Activated CD8-positive, alpha-beta T cell treated with anti-CD3 and anti-CD28 coated beads for 36 hours (primary cell): ENCODE measurements at regions of chrX and their contacts with region 1.

Region 1: GRCh38 chrX:69222103-69223090 is 57.1 kb upstream of the PJA1 start:
- DNase-seq: peak; percentile 78
- ATAC-seq: peak; percentile 90
- H3K4me3 Mint-ChIP-seq: no peak overlapping the region
- H3K27ac Mint-ChIP-seq: no peak overlapping the region
- H3K4me1 Mint-ChIP-seq: no peaks in the 10 kb centered on the region
- H3K27me3 Mint-ChIP-seq: no peaks in the 10 kb centered on the region
- CTCF ChIP-seq: peak; percentile 52

Region 2: GRCh38 chrX:68732906-68733493 is 489.4 kb before region 1 on chrX:
- CTCF ChIA-PET with region 1: interaction called, 7 read pairs
- POLR2A ChIA-PET with region 1: no interaction called
- intact Hi-C with region 1: loop called (anchors 10 kb)
- DNase-seq: peak; percentile 73
- ATAC-seq: peak; percentile 71
- H3K4me3 Mint-ChIP-seq: no peak overlapping the region
- H3K27ac Mint-ChIP-seq: no peak overlapping the region
- H3K4me1 Mint-ChIP-seq: peaks cover 2% of the 10 kb centered on the region
- H3K27me3 Mint-ChIP-seq: peaks cover 4% of the 10 kb centered on the region
- CTCF ChIP-seq: peak; percentile 53

Region 3: GRCh38 chrX:68828740-68829552 is 393.5 kb before region 1 on chrX and contains the start of gene EFNB1:
- CTCF ChIA-PET with region 1: interaction called, 83 read pairs
- POLR2A ChIA-PET with region 1: interaction called, 3 read pairs
- intact Hi-C with region 1: loop called (anchors 5 kb)
- DNase-seq: peak; percentile 88
- ATAC-seq: peak; percentile 93
- H3K4me3 Mint-ChIP-seq: peak within 1 kb of the TSS; percentile 79
- H3K27ac Mint-ChIP-seq: peak within 1 kb of the TSS; percentile 75
- H3K4me1 Mint-ChIP-seq: peaks cover 20% of the 10 kb centered on the region
- H3K27me3 Mint-ChIP-seq: no peaks in the 10 kb centered on the region
- CTCF ChIP-seq: no peak
- total RNA-seq, gene EFNB1: 3.1 to 4.2 TPM

Region 4: GRCh38 chrX:69093960-69094871 is 128.2 kb before region 1 on chrX:
- CTCF ChIA-PET with region 1: interaction called, 14 read pairs
- POLR2A ChIA-PET with region 1: no interaction called
- intact Hi-C with region 1: no loop called
- DNase-seq: peak; percentile 43
- ATAC-seq: peak; percentile 66
- H3K4me3 Mint-ChIP-seq: no peak overlapping the region
- H3K27ac Mint-ChIP-seq: no peak overlapping the region
- H3K4me1 Mint-ChIP-seq: no peaks in the 10 kb centered on the region
- H3K27me3 Mint-ChIP-seq: no peaks in the 10 kb centered on the region
- CTCF ChIP-seq: no peak

Region 5: DNA sequence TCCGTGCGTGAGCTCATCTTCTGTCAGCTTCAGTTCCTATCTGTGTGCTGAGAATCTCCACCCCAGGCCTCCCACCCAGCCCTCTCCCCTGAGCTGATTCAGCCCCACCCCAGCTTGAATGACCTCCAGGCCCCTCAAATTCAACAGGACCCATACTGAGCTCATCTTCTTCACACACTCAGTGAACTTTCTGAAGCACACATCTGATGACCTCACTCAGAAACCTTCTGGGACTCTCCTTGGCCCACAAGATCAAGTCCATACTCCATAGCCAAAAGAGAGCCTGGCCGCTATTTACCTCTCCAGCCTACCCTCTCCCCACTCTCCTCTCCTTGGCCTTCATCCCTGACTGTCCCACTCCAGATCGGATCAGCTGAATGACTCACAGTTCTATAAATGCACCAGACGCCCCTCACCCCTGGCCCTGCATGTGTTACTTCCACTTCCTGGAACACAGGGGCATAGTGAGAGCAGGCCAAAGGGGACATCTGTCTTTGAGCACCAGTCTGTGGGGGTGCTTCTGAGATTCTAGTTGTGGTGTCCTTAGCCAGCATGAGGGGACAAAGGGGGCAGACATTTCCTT is 119.7 kb before region 1 on chrX:
- CTCF ChIA-PET with region 1: interaction called, 5 read pairs
- POLR2A ChIA-PET with region 1: no interaction called
- intact Hi-C with region 1: loop called (anchors 5 kb)
- DNase-seq: no peak
- ATAC-seq: no peak
- H3K4me3 Mint-ChIP-seq: no peak overlapping the region
- H3K27ac Mint-ChIP-seq: no peak overlapping the region
- H3K4me1 Mint-ChIP-seq: no peaks in the 10 kb centered on the region
- H3K27me3 Mint-ChIP-seq: no peaks in the 10 kb centered on the region
- CTCF ChIP-seq: no peak

Region 6: GRCh38 chrX:69197690-69198089 is 24.7 kb before region 1 on chrX:
- CTCF ChIA-PET with region 1: no interaction called
- POLR2A ChIA-PET with region 1: no interaction called
- intact Hi-C with region 1: no loop called
- DNase-seq: no peak
- ATAC-seq: no peak
- H3K4me3 Mint-ChIP-seq: no peak overlapping the region
- H3K27ac Mint-ChIP-seq: no peak overlapping the region
- H3K4me1 Mint-ChIP-seq: no peaks in the 10 kb centered on the region
- H3K27me3 Mint-ChIP-seq: no peaks in the 10 kb centered on the region
- CTCF ChIP-seq: no peak

Region 7: DNA sequence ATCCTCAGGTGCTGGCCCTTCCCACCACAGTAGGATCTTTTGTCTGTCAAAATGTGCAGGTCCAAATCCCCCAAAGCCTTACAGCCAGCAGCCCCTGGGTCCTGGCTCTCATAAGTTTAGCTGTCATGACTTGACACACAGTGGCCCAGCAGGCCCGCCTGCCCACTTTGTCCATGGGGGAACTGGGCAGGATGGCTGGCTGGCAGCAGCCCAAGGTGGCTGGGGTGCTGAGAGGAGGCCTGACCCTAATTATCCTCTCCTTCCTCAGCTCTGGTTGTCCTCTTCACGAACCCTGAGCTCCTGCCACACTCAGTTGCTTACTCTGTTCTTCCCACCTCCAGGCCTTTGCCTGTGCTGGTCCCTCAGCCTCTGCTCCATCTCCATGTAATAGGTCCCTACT is 10.7 kb before region 1 on chrX:
- CTCF ChIA-PET with region 1: interaction called, 10 read pairs
- POLR2A ChIA-PET with region 1: no interaction called
- intact Hi-C with region 1: no loop called
- DNase-seq: no peak
- ATAC-seq: no peak
- H3K4me3 Mint-ChIP-seq: no peak overlapping the region
- H3K27ac Mint-ChIP-seq: no peak overlapping the region
- H3K4me1 Mint-ChIP-seq: no peaks in the 10 kb centered on the region
- H3K27me3 Mint-ChIP-seq: no peaks in the 10 kb centered on the region
- CTCF ChIP-seq: no peak

Region 8: DNA sequence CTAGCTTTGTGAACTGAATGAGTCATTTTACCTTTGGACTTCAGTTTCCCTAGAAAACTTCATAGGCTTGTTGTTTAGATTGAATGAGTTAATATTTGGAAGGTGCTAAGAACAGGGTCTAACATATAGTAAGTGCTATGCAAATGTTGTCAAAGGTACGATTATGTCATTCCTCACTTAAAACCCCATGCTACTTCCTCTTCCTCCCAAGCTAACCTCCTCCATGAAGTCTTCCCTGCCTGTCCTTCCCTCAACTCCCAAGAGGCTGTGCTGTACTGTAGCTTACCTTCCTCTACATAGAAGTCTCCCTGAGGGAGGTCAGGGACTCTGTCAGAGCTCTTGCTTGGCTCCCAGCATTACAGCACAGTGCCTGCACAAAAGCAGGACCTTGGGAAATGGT is 46.2 kb after region 1 on chrX:
- CTCF ChIA-PET with region 1: no interaction called
- POLR2A ChIA-PET with region 1: no interaction called
- intact Hi-C with region 1: no loop called
- DNase-seq: no peak
- ATAC-seq: no peak
- H3K4me3 Mint-ChIP-seq: no peak overlapping the region
- H3K27ac Mint-ChIP-seq: no peak overlapping the region
- H3K4me1 Mint-ChIP-seq: no peaks in the 10 kb centered on the region
- H3K27me3 Mint-ChIP-seq: peaks cover 1% of the 10 kb centered on the region
- CTCF ChIP-seq: no peak